Endothelial cell of umbilical vein (primary cell): ENCODE measurements at regions of chr19 and their contacts with region 1.

Region 1: GRCh38 chr19:47047763-47048405 is 540 bp downstream of the TMEM160 start:
- DNase-seq: peak; percentile 90
- H3K4me3 ChIP-seq: peak overlapping the region; percentile 37 to 84 (median 62)
- H3K27ac ChIP-seq: no peak overlapping the region
- H3K4me1 ChIP-seq: peaks cover 3% of the 10 kb centered on the region
- H3K27me3 ChIP-seq: no peaks in the 10 kb centered on the region
- CTCF ChIP-seq: no peak
- POLR2A ChIP-seq: no peak

Region 2: DNA sequence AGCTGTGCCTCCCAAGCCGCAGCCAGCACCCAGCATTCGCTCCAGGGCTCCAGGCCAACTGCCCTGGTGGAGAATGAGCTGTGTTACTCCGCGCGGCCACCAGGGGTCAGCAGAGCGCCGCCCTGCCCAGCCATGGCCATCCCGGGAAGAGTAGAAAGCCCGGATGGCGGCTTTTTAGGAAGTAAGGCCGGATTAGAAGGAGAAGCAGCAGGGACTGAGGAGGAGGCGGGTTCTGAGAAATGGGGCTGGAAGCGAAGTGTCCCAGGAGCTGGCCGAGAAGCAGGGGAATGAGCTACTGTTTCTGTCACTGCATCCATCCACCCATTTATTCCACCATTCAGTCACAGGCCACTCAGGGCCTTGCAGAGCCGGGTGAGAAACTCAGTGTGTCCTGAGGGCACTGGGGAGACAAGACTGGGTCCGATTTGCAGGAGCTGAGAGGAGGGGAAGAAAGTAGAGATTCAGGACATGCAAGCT is 34.8 kb before region 1 on chr19:
- CTCF ChIA-PET with region 1: no interaction called
- POLR2A ChIA-PET with region 1: no interaction called
- dilution Hi-C with region 1: no loop called
- intact Hi-C with region 1: no loop called
- DNase-seq: peak; percentile 66
- H3K4me3 ChIP-seq: no peak overlapping the region
- H3K27ac ChIP-seq: no peak overlapping the region
- H3K4me1 ChIP-seq: no peaks in the 10 kb centered on the region
- H3K27me3 ChIP-seq: no peaks in the 10 kb centered on the region
- CTCF ChIP-seq: peak; percentile 98 to 99
- POLR2A ChIP-seq: no peak

Region 3: GRCh38 chr19:47035127-47036096 is 12.5 kb before region 1 on chr19:
- CTCF ChIA-PET with region 1: interaction called, 13 read pairs
- POLR2A ChIA-PET with region 1: interaction called, 3 read pairs
- dilution Hi-C with region 1: no loop called
- intact Hi-C with region 1: loop called (anchors 1 kb)
- DNase-seq: peak; percentile 92
- H3K4me3 ChIP-seq: peak overlapping the region; percentile 32 to 75 (median 73)
- H3K27ac ChIP-seq: no peak overlapping the region
- H3K4me1 ChIP-seq: peaks cover 8% of the 10 kb centered on the region
- H3K27me3 ChIP-seq: peaks cover 0 to 2% of the 10 kb centered on the region in 2 experiments
- CTCF ChIP-seq: peak; percentile 84 to 94
- POLR2A ChIP-seq: no peak

Region 4: DNA sequence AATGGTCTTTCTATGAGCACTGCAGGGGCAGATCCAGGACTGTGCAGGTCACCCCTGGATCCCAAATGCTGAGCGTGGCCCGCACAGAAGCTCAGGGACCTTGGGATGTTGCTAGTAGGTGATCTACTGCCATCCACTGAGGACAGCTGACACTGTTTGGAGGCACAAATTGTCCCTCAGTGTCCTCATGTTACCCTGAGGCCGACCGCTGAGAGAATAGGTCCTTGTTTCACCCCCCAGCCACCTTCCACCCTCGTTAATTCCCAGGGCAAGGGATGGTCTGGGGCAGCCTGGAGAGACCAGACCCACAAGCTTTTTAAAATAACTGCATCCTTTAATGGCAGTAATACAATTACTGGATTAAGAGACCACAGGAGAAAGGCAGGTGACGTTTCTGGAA is 16.0 kb after region 1 on chr19:
- CTCF ChIA-PET with region 1: no interaction called
- POLR2A ChIA-PET with region 1: no interaction called
- dilution Hi-C with region 1: no loop called
- intact Hi-C with region 1: no loop called
- DNase-seq: no peak
- H3K4me3 ChIP-seq: no peak overlapping the region
- H3K27ac ChIP-seq: no peak overlapping the region
- H3K4me1 ChIP-seq: no peaks in the 10 kb centered on the region
- H3K27me3 ChIP-seq: no peaks in the 10 kb centered on the region
- CTCF ChIP-seq: no peak
- POLR2A ChIP-seq: no peak